ENCODE measurements at regions of chr21 and their contacts with region 1.

Region 1: DNA sequence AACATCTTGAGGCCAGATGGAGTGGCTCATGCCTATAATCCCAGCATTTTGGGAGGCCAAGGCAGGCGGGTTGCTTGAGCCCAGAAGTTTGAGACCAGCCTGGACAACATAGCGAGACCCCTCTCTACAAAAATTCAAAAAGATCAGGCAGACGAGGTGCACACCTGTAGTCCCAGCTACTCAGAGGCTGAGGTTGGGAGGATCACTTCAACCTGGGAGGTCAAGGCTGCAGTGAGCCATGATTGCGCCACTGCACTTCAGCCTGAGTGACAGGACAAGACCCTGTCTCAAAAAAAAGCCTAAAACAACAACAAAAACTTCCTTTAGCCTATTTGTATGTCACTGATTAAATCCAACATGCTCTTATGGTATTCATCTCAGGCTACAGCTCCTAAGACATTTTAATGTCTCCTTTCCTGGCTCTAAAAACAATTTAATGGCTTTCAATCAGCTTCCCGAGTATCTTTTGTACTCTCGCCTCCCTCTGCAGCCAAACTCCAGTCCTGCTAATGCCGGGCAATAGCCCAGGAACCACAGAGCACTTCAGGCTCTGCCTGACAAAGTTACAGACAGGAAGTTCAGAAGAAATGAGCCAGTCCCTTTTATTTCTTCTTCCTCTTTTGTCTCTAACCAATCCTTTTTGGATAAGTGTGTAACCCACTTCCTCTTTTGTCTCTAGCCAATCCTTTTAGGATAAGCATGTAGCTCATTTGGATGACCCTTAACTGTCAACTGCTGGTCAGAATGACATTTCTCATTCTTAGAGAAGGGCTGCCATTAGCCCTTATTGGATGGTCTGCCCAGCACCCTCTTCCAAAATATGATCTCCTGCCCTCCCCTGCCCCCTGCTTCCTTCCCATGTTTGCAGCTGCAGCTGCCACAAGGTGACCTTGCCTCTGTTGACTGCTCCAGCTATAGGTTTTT is 6.6 kb upstream of the DOP1B start:
- DNase-seq: no peak
- H3K4me3 ChIP-seq: no peak overlapping the region
- H3K4me3 Mint-ChIP-seq: peak overlapping the region in 7 of 8 donors; percentile 54 to 77 (median 65)
- H3K27ac ChIP-seq: no peak overlapping the region
- H3K27ac Mint-ChIP-seq: peak overlapping the region; percentile 76 to 95 (median 91)
- H3K4me1 ChIP-seq: peaks cover 44% of the 10 kb centered on the region
- H3K4me1 Mint-ChIP-seq: peaks cover 29 to 63% (median 46%) of the 10 kb centered on the region in 4 donors
- H3K27me3 ChIP-seq: no peaks in the 10 kb centered on the region
- H3K27me3 Mint-ChIP-seq: no peaks in the 10 kb centered on the region

Region 2: DNA sequence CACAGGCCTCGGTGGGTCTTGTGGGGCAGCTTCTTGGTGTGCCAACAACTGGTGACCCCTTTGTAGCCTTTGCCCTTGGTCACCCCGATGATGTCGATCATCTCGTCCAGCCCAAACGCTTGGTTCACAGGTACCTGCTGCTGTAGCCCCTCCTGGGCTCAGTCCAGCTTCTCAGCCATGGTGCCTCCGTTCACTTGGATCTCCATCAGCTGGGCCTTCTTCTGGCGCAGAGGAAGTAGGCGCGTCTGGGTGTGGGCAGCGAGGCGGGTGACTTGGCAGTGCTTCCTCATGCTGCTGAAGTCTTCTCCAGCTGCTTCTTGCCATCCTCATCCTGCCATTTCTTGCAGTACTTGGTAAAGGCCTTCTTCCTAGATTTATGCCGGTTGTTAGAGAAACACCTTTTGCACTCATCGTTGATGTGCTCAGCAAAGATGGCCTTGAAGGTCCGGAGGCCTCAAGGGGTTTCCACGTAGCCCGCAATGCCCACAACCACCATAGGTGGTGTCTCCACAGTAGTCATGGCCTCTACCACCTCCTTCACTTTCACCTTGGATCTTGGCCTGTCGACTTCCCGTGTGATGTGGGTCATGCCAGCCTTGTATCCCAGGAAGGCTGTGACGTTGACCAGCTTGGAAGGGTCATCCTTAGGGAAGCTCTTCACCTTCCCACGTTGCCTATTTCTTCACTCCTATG is 19.5 kb after region 1 on chr21:
- CTCF ChIA-PET with region 1: interaction called, 83 read pairs
- POLR2A ChIA-PET with region 1: interaction called, 28 read pairs
- intact Hi-C with region 1: no loop called
- DNase-seq: no peak
- H3K4me3 ChIP-seq: no peak overlapping the region
- H3K4me3 Mint-ChIP-seq: no peak overlapping the region
- H3K27ac ChIP-seq: no peak overlapping the region
- H3K27ac Mint-ChIP-seq: peak overlapping the region in 1 of 7 donors; percentile 86
- H3K4me1 ChIP-seq: peaks cover 16% of the 10 kb centered on the region
- H3K4me1 Mint-ChIP-seq: peaks cover 6 to 19% (median 7%) of the 10 kb centered on the region in 4 donors
- H3K27me3 ChIP-seq: no peaks in the 10 kb centered on the region
- H3K27me3 Mint-ChIP-seq: no peaks in the 10 kb centered on the region

Measured in CD4-positive, alpha-beta memory T cell (primary cell).